ENCODE measurements at regions of chr4 and their contacts with region 1.

Region 1: GRCh38 chr4:18021722-18022571 is at the start of gene LCORL:
- DNase-seq: peak; percentile 91
- H3K4me3 Mint-ChIP-seq: peak within 1 kb of the TSS; percentile 91
- H3K27ac Mint-ChIP-seq: peak within 1 kb of the TSS; percentile 78
- H3K4me1 Mint-ChIP-seq: peaks cover 13% of the 10 kb centered on the region
- H3K27me3 Mint-ChIP-seq: peaks cover 37% of the 10 kb centered on the region
- total RNA-seq, gene LCORL: 8.1 to 10.5 TPM

Region 2: GRCh38 chr4:17336524-17336961 is 685.4 kb before region 1 on chr4:
- CTCF ChIA-PET with region 1: no interaction called
- POLR2A ChIA-PET with region 1: no interaction called
- intact Hi-C with region 1: loop called (anchors 5 kb)
- DNase-seq: peak; percentile 87
- H3K4me3 Mint-ChIP-seq: peak overlapping the region; percentile 44
- H3K27ac Mint-ChIP-seq: peak overlapping the region; percentile 75
- H3K4me1 Mint-ChIP-seq: peaks cover 33% of the 10 kb centered on the region
- H3K27me3 Mint-ChIP-seq: no peaks in the 10 kb centered on the region

Region 3: GRCh38 chr4:17511950-17512795 is 509.8 kb before region 1 on chr4 and contains the start of gene QDPR:
- CTCF ChIA-PET with region 1: no interaction called
- POLR2A ChIA-PET with region 1: no interaction called
- intact Hi-C with region 1: loop called (anchors 2 kb)
- DNase-seq: peak; percentile 84
- H3K4me3 Mint-ChIP-seq: peak within 1 kb of the TSS; percentile 99
- H3K27ac Mint-ChIP-seq: peak within 1 kb of the TSS; percentile 77
- H3K4me1 Mint-ChIP-seq: peaks cover 26% of the 10 kb centered on the region
- H3K27me3 Mint-ChIP-seq: peaks cover 7% of the 10 kb centered on the region
- total RNA-seq, gene QDPR: 35.5 to 36.3 TPM

Region 4: GRCh38 chr4:17614416-17615299 is 407.3 kb before region 1 on chr4 and contains the start of gene MED28:
- CTCF ChIA-PET with region 1: no interaction called
- POLR2A ChIA-PET with region 1: no interaction called
- intact Hi-C with region 1: loop called (anchors 1 kb)
- DNase-seq: peak; percentile 97
- H3K4me3 Mint-ChIP-seq: peak within 1 kb of the TSS; percentile 100
- H3K27ac Mint-ChIP-seq: peak within 1 kb of the TSS; percentile 97
- H3K4me1 Mint-ChIP-seq: peaks cover 48% of the 10 kb centered on the region
- H3K27me3 Mint-ChIP-seq: peaks cover 3% of the 10 kb centered on the region
- total RNA-seq, gene MED28: 52.9 to 54.5 TPM

Region 5: GRCh38 chr4:17817020-17817419 is 204.9 kb before region 1 on chr4:
- CTCF ChIA-PET with region 1: interaction called, 10 read pairs
- POLR2A ChIA-PET with region 1: no interaction called
- intact Hi-C with region 1: no loop called
- DNase-seq: no peak
- H3K4me3 Mint-ChIP-seq: no peak overlapping the region
- H3K27ac Mint-ChIP-seq: no peak overlapping the region
- H3K4me1 Mint-ChIP-seq: peaks cover 15% of the 10 kb centered on the region
- H3K27me3 Mint-ChIP-seq: no peaks in the 10 kb centered on the region

Region 6: GRCh38 chr4:18057821-18058533 is 36.0 kb after region 1 on chr4:
- CTCF ChIA-PET with region 1: no interaction called
- POLR2A ChIA-PET with region 1: no interaction called
- intact Hi-C with region 1: loop called (anchors 1 kb)
- DNase-seq: no peak
- H3K4me3 Mint-ChIP-seq: no peak overlapping the region
- H3K27ac Mint-ChIP-seq: no peak overlapping the region
- H3K4me1 Mint-ChIP-seq: peaks cover 10% of the 10 kb centered on the region
- H3K27me3 Mint-ChIP-seq: peaks cover 31% of the 10 kb centered on the region

Region 7: GRCh38 chr4:19580095-19580494 is 1558.1 kb after region 1 on chr4:
- CTCF ChIA-PET with region 1: no interaction called
- POLR2A ChIA-PET with region 1: no interaction called
- intact Hi-C with region 1: no loop called
- DNase-seq: no peak
- H3K4me3 Mint-ChIP-seq: no peak overlapping the region
- H3K27ac Mint-ChIP-seq: no peak overlapping the region
- H3K4me1 Mint-ChIP-seq: no peaks in the 10 kb centered on the region
- H3K27me3 Mint-ChIP-seq: no peaks in the 10 kb centered on the region

Measured in activated CD4-positive, alpha-beta memory T cell treated with anti-CD3 and anti-CD28 coated beads for 36 hours (primary cell).